Common myeloid progenitor, CD34-positive (primary cell): ENCODE measurements at regions of chr20 and their contacts with region 1.

Region 1: GRCh38 chr20:32031007-32031958 is 20.8 kb upstream of the HCK start:
- DNase-seq: peak in 2 of 3 donors; percentile 65 to 67
- H3K4me3 ChIP-seq: peak overlapping the region in 6 of 7 experiments; percentile 23 to 58 (median 50)
- H3K27ac ChIP-seq: no peak overlapping the region
- H3K4me1 ChIP-seq: peaks cover 2 to 16% (median 8%) of the 10 kb centered on the region in 4 experiments
- H3K27me3 ChIP-seq: peaks cover 0 to 5% (median 0%) of the 10 kb centered on the region in 5 experiments

Region 2: GRCh38 chr20:31835977-31836852 is 195.1 kb before region 1 on chr20:
- CTCF ChIA-PET with region 1: interaction called, 12 read pairs
- POLR2A ChIA-PET with region 1: no interaction called
- DNase-seq: peak; percentile 90 to 98 (median 97)
- H3K4me3 ChIP-seq: peak overlapping the region in 4 of 7 experiments; percentile 14 to 37 (median 26)
- H3K27ac ChIP-seq: no peak overlapping the region
- H3K4me1 ChIP-seq: peaks cover 3 to 59% (median 55%) of the 10 kb centered on the region in 4 experiments
- H3K27me3 ChIP-seq: no peaks in the 10 kb centered on the region

Region 3: DNA sequence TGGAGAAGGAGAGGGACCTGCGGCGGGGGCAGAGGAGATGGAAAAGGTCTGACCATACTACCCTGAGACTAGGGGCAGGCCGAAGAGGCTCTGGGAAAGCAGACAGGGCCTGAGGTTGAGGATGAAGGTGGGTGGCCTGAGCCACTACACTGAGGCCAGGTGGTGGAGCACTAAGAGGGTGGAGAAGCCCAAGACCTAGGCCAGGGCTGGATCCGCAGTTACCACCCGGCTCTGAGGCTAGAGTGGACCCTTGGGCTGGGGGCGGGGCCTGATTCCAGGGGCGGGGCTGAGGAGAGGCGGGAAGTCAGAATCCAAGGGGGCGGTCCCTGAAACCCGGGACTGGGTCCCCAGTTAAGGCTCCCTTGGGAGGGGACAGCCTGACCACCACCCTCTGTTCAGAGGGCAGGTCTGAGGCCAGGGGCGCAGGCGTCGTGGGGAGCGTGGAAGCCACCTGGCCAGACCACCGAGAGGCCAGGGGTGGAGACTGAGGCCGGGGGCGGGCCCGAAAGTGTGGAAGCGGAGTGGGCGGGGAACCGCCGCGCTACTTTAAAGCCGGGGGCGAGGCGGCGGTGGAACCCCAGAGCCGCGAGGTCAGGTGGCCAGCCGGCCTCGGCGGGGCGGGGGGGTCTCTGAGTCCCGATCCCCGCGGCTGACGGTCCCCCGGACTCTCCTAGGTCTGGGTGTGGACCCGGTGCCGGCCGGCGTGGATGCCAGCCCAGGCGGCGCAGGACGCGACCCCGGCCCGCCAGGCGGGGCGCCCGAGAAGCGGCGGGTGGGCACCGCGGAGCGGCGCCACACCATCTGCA is 12.8 kb before region 1 on chr20:
- CTCF ChIA-PET with region 1: interaction called, 40 read pairs
- POLR2A ChIA-PET with region 1: no interaction called
- DNase-seq: peak in 2 of 3 donors; percentile 26 to 37
- H3K4me3 ChIP-seq: peak overlapping the region in 6 of 7 experiments; percentile 27 to 66 (median 63)
- H3K27ac ChIP-seq: no peak overlapping the region
- H3K4me1 ChIP-seq: peaks cover 6 to 25% (median 19%) of the 10 kb centered on the region in 4 experiments
- H3K27me3 ChIP-seq: peaks cover 0 to 38% (median 22%) of the 10 kb centered on the region in 5 experiments

Region 4: GRCh38 chr20:32062776-32063170 is 31.5 kb after region 1 on chr20:
- CTCF ChIA-PET with region 1: interaction called, 70 read pairs
- POLR2A ChIA-PET with region 1: no interaction called
- DNase-seq: peak; percentile 34 to 81 (median 78)
- H3K4me3 ChIP-seq: peak overlapping the region in 1 of 7 experiments; percentile 20
- H3K27ac ChIP-seq: no peak overlapping the region
- H3K4me1 ChIP-seq: peaks cover 9 to 60% (median 14%) of the 10 kb centered on the region in 4 experiments
- H3K27me3 ChIP-seq: no peaks in the 10 kb centered on the region

Region 5: DNA sequence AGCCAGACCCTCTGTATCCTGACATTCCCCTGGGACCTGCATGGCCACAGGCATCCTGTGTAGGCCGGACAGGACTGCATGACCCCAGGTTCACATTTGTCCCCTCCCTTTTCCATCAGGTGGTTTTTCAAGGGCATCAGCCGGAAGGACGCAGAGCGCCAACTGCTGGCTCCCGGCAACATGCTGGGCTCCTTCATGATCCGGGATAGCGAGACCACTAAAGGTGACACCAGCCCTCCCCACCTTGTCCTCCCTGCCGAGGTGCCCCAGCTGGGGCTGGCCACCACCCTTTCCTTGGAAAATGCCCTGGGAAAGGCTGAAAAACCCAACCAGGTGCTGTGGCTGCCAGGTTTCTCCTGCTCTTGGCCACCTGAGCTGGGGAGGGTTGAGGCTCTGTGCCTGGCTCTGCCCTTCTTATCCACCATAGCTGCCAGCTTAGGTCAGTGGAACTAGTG is 48.4 kb after region 1 on chr20:
- CTCF ChIA-PET with region 1: interaction called, 254 read pairs
- POLR2A ChIA-PET with region 1: no interaction called
- DNase-seq: no peak
- H3K4me3 ChIP-seq: no peak overlapping the region
- H3K27ac ChIP-seq: peak overlapping the region in 1 of 2 experiments; percentile 11
- H3K4me1 ChIP-seq: peaks cover 8 to 29% (median 18%) of the 10 kb centered on the region in 4 experiments
- H3K27me3 ChIP-seq: no peaks in the 10 kb centered on the region

Region 6: DNA sequence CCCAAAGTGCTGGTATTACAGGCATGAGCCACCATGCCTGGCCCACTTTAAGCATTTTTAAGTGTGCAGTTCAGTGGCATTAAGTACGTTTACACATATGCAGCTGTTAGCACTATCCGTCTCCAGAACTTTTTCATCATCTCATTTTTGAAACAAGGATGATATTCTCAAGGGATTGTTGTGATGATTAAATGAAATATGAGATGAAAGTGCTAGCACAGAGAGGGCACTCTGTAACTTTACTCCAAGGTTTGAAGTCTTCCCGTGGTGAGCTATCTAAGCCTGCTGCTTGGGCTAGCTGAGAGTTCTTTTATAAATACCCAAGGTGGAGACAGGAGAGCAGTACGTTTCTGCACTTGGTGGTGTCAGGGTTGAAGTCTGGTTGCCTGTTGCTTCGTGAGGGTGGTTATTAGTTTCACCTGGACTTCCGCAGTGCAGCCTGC is 84.8 kb after region 1 on chr20:
- CTCF ChIA-PET with region 1: no interaction called
- POLR2A ChIA-PET with region 1: no interaction called
- DNase-seq: no peak
- H3K4me3 ChIP-seq: no peak overlapping the region
- H3K27ac ChIP-seq: no peak overlapping the region
- H3K4me1 ChIP-seq: peaks cover 3 to 36% (median 13%) of the 10 kb centered on the region in 4 experiments
- H3K27me3 ChIP-seq: no peaks in the 10 kb centered on the region